ENCODE measurements at regions of chr10 and their contacts with region 1.

Region 1: DNA sequence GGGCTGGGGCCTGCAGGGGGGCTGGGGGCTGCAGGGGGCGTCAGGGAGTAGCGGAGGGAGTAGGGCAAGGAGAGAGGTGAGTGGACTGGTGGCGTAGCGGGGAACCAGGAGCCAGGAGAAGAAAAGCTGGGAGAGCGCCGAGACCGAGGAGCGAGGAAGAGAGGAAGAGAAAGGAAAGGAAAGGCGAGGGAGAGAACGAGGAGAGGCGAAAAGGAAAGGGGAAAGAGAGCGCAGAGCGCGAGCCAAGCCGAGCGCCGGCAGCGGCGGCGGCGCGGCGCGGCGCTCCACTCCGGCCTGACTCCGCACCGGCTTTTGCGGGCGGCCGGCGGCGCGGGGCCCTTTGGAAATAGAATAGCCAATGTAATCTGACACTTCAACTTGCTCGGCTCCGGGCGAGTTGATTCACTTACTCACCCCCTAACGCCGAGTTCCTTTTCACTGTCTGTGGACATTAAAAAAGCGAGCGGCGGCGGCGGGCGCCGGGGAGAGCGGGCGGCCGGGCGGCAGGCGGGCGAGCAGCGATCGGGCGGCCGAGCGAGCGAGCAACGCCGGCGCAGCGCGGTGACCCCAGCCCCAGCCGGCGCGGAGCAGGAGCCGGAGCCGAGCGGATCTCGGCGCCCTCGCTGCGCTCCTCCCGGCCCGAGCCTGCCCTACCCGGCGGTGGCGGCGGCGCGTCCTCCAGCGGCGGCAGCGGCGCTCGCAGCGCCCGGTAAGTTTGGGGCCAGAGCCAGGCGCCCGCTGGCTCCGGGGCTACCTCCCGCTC is at the start of gene ZMIZ1:
- DNase-seq: peak; percentile 87 to 93
- H3K4me3 ChIP-seq: peak within 1 kb of the TSS; percentile 85
- H3K27ac ChIP-seq: peak within 1 kb of the TSS; percentile 33
- H3K4me1 ChIP-seq: peaks cover 37% of the 10 kb centered on the region
- H3K27me3 ChIP-seq: no peaks in the 10 kb centered on the region
- CTCF ChIP-seq: no peak; the same call in 1 of the 2 replicates
- total RNA-seq, gene ZMIZ1: 47.6 and 48.5 TPM in 2 replicates

Region 2: GRCh38 chr10:77889277-77889903 is 1179.4 kb before region 1 on chr10:
- CTCF ChIA-PET with region 1: no interaction called
- POLR2A ChIA-PET with region 1: interaction called, 13 read pairs
- intact Hi-C with region 1: no loop called
- DNase-seq: peak; percentile 93 to 97
- H3K4me3 ChIP-seq: no peak overlapping the region
- H3K27ac ChIP-seq: peak overlapping the region; percentile 73
- H3K4me1 ChIP-seq: peaks cover 34% of the 10 kb centered on the region
- H3K27me3 ChIP-seq: no peaks in the 10 kb centered on the region
- CTCF ChIP-seq: no peak

Region 3: DNA sequence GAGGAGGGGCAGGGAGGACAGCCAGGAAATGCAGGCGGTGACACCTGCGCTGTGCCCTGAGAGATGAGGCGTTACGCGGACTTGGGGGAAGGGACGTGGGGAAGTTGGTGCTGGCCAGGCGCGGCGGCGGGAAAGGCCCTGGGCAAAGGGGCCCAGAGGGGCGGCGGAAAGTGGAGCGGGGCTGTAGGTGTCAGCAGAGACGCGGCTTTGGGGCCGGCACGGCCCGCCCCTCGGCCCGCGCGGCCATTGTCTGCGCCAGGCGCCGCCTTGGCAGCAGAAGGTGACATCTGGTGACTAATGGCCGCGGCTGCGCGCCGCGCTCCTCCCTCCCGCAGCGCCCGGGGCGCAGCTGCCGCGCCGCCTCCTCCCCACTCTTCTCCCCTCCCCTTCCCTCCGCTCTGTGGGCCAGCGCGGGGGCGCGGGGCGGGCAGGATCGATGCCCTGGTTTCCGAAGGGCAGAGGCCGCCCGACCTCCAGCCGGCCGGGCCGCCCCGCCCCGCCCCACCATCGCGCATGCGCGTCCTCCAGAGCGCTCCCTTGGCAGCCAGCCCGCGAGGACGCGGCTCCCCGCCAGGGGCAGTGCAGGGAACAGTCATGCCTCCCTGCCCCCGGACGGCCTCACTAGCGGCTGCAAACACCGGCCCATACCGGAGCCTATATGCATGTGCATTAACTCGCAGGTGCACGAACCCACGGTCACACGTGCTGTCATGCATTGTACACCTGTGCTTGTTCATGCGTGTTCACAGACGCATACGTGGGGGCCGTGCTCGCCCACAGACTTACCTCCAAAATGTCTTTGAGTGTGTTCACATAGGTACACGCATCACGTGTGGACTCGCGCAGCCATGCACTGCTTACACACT is 765.5 kb before region 1 on chr10:
- CTCF ChIA-PET with region 1: no interaction called
- POLR2A ChIA-PET with region 1: no interaction called
- intact Hi-C with region 1: loop called (anchors 1 kb)
- DNase-seq: peak; percentile 83 to 98
- H3K4me3 ChIP-seq: peak overlapping the region; percentile 66
- H3K27ac ChIP-seq: peak overlapping the region; percentile 42; the same call in 1 of the 2 replicates
- H3K4me1 ChIP-seq: peaks cover 10% of the 10 kb centered on the region
- H3K27me3 ChIP-seq: no peaks in the 10 kb centered on the region
- CTCF ChIP-seq: peak; percentile 81

Region 4: GRCh38 chr10:78437998-78438906 is 630.5 kb before region 1 on chr10:
- CTCF ChIA-PET with region 1: no interaction called
- POLR2A ChIA-PET with region 1: no interaction called
- intact Hi-C with region 1: no loop called
- DNase-seq: no peak
- H3K4me3 ChIP-seq: no peak overlapping the region
- H3K27ac ChIP-seq: no peak overlapping the region
- H3K4me1 ChIP-seq: no peaks in the 10 kb centered on the region
- H3K27me3 ChIP-seq: peaks cover 7% of the 10 kb centered on the region; the same call in 1 of the 2 replicates
- CTCF ChIP-seq: peak; percentile 33; the same call in 1 of the 2 replicates

Region 5: GRCh38 chr10:78777466-78777865 is 291.3 kb before region 1 on chr10:
- CTCF ChIA-PET with region 1: no interaction called
- POLR2A ChIA-PET with region 1: no interaction called
- intact Hi-C with region 1: loop called (anchors 5 kb)
- DNase-seq: no peak
- H3K4me3 ChIP-seq: no peak overlapping the region
- H3K27ac ChIP-seq: no peak overlapping the region
- H3K4me1 ChIP-seq: peaks cover 20% of the 10 kb centered on the region
- H3K27me3 ChIP-seq: no peaks in the 10 kb centered on the region
- CTCF ChIP-seq: no peak

Region 6: DNA sequence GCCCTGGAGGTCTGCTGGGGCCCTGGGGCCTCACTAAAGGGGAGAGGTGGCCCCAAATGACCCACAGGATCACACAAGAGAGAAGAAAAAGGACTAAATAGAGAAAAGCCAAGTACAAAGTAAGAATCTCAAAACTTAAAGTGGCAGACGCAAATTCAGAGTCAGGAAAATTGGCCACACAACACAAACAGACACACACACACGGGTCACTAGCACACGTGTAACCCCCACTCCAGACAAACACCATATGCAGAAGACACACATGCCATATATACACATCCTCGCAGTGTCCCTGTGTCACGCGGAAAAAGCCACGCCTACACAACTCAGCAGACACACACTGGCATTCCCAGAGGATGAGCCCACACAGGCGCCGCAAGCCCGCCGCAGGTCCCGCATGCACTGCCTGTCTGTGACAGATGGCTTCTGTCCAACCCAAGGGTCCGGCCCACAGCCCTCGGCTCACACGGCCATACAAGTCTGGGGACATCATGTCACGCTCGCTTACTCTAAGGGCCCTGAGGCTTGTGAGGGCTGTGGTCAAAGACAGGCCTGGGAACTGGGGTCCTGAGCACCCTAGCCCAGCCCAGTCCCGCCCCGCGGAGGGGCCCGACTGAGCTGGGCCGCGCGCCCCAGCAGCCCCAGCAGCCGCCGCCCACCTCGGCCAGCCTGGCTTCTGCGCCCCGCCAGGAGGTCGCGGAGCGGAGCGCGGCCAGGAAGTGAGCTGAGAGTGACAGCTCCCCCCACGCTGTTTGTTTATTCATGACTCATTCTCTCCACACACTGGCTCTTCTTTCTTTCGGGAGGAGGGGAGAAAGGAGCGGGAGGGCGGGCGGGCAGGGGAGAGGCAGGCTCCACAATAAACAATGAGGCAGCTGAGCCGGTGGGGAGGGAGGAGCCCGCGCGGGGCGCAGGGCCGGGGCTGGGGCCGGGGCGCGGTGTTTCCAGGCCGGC is 95.5 kb before region 1 on chr10:
- CTCF ChIA-PET with region 1: no interaction called
- POLR2A ChIA-PET with region 1: no interaction called
- intact Hi-C with region 1: loop called (anchors 1 kb)
- DNase-seq: peak; percentile 89 to 93
- H3K4me3 ChIP-seq: peak overlapping the region; percentile 59
- H3K27ac ChIP-seq: peak overlapping the region; percentile 94
- H3K4me1 ChIP-seq: peaks cover 58% of the 10 kb centered on the region
- H3K27me3 ChIP-seq: no peaks in the 10 kb centered on the region
- CTCF ChIP-seq: no peak

Region 7: GRCh38 chr10:79149662-79150443 is 81.1 kb after region 1 on chr10:
- CTCF ChIA-PET with region 1: interaction called, 5 read pairs
- POLR2A ChIA-PET with region 1: no interaction called
- intact Hi-C with region 1: loop called (anchors 1 kb)
- DNase-seq: peak; percentile 92 to 99
- H3K4me3 ChIP-seq: peak overlapping the region; percentile 29; the same call in 1 of the 2 replicates
- H3K27ac ChIP-seq: peak overlapping the region; percentile 90
- H3K4me1 ChIP-seq: peaks cover 62% of the 10 kb centered on the region
- H3K27me3 ChIP-seq: no peaks in the 10 kb centered on the region
- CTCF ChIP-seq: no peak

Measured in PC-9 (cell line).